OCI-LY7 (cell line): ENCODE measurements at regions of chr3 and their contacts with region 1.

Region 1: GRCh38 chr3:103794656-103795055 is 1359.8 kb downstream of the ZPLD1 start:
- DNase-seq: peak; percentile 0
- H3K4me3 ChIP-seq: no peak overlapping the region
- H3K27ac ChIP-seq: no peak overlapping the region
- H3K4me1 ChIP-seq: no peaks in the 10 kb centered on the region
- CTCF ChIP-seq: peak; percentile 57

Region 2: DNA sequence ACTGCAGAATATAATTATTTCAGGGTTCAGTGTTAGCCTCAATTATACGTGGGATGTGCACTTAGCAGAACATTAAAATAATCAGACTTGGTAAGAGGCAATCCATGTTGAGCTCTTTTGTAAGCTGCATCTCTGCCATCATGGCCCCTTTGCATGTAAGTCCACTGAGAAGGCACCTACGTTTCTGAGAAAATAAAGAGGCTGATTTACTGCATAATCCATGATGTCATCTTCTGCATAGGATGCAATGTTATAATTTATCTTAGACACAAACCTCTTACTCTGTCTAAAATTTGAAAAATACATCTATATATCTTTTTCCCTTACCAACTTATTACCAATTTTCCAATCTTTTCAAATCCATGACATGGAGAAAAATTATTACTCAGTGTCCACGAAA is 65.1 kb before region 1 on chr3:
- CTCF ChIA-PET with region 1: no interaction called
- POLR2A ChIA-PET with region 1: no interaction called
- intact Hi-C with region 1: no loop called
- DNase-seq: no peak
- H3K4me3 ChIP-seq: no peak overlapping the region
- H3K27ac ChIP-seq: no peak overlapping the region
- H3K4me1 ChIP-seq: no peaks in the 10 kb centered on the region
- CTCF ChIP-seq: no peak

Region 3: GRCh38 chr3:104018541-104018940 is 223.9 kb after region 1 on chr3:
- CTCF ChIA-PET with region 1: no interaction called
- POLR2A ChIA-PET with region 1: no interaction called
- intact Hi-C with region 1: loop called (anchors 10 kb)
- DNase-seq: no peak
- H3K4me3 ChIP-seq: no peak overlapping the region
- H3K27ac ChIP-seq: no peak overlapping the region
- H3K4me1 ChIP-seq: no peaks in the 10 kb centered on the region
- CTCF ChIP-seq: no peak